MCF 10A (cell line): ENCODE measurements at regions of chr15 and their contacts with region 1.

Region 1: GRCh38 chr15:29935276-29936020 is 113.2 kb upstream of the TJP1 start:
- DNase-seq: peak; percentile 48
- H3K4me3 Mint-ChIP-seq: peak overlapping the region; percentile 21
- H3K27ac Mint-ChIP-seq: peak overlapping the region; percentile 68
- H3K4me1 Mint-ChIP-seq: peaks cover 46% of the 10 kb centered on the region
- H3K27me3 Mint-ChIP-seq: no peaks in the 10 kb centered on the region
- CTCF ChIP-seq: no peak

Region 2: GRCh38 chr15:29765898-29766527 is 169.4 kb before region 1 on chr15:
- CTCF ChIA-PET with region 1: interaction called, 3 read pairs
- POLR2A ChIA-PET with region 1: no interaction called
- intact Hi-C with region 1: loop called (anchors 5 kb)
- DNase-seq: no peak
- H3K4me3 Mint-ChIP-seq: no peak overlapping the region
- H3K27ac Mint-ChIP-seq: no peak overlapping the region
- H3K4me1 Mint-ChIP-seq: peaks cover 12% of the 10 kb centered on the region
- H3K27me3 Mint-ChIP-seq: no peaks in the 10 kb centered on the region
- CTCF ChIP-seq: no peak

Region 3: DNA sequence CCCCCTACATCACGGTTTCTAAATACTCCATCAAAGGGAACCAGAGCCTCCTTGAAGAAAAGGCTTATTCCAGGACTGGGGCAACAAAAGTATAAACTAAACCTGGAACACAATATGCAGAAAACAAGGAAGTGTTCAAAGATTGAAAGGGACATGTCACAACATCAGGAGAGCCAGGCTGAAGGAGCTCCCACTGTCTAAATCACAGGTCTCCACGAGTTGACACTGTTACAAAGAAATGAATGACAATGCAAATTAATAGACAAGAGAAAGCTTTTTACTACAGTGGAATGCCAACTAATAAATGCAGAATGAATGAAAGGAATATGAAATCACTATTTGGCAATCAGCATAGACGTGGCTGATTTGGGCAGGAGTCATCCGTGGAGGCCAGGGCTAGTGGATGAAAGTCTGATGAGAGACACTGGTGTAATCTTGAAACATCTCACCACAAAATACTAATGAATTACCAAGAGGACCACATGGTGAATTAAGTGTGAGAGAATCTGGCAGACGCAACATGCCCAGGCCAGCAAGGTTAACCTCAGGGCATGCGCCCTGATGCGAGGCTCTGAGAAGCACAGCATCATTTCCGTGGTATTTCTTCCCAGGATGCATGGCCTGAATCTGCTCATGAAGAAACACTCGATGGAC is 10.6 kb after region 1 on chr15:
- CTCF ChIA-PET with region 1: no interaction called
- POLR2A ChIA-PET with region 1: interaction called, 20 read pairs
- intact Hi-C with region 1: no loop called
- DNase-seq: peak; percentile 33
- H3K4me3 Mint-ChIP-seq: no peak overlapping the region
- H3K27ac Mint-ChIP-seq: peak overlapping the region; percentile 69
- H3K4me1 Mint-ChIP-seq: peaks cover 15% of the 10 kb centered on the region
- H3K27me3 Mint-ChIP-seq: no peaks in the 10 kb centered on the region
- CTCF ChIP-seq: no peak